Adrenal gland (tissue), 19 donors: ENCODE measurements at regions of chr1 and their contacts with region 1.

Region 1: DNA sequence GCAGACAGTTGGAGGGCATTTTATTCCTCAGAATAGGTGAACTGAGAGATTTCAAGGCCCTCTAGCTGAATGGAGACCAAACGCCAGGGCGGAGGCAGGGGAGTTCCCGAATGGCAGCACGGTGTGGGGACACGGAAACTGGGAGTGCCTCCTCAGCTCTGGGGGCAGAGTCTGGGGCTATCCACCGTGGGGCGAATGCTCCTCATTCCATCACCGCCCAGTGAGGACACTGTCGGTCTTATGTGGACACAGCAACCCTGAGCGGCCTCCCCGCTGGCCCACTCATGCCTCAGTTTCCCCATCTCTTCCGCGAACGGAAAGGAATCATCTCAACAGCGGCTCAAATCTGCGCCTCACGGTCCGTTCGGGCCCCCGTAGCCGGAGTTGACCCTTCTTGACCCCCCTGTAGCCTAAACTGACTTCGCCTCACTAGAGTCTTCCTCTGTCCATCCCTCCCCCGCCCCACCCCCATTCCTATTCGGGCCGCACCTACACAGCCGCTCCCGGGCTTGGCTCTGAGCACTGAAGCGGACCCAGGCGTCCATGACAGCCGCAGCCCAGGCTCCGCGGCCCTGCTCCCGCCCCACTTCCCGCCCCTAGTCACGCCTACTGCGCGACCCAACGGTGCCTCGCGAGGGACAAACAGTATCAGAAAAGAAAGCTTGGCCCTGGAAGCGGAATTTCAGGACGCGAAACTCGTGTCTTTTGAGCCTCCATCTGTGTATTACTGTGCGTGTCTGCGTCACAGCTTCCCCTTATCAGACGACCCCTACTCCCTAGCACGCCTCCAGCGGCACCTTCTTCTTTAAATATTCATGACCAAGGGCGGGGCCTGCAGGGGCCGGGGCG is at the start of gene PEX11B:
- DNase-seq: peak; percentile 86 to 94 (median 90)
- H3K4me3 ChIP-seq: peak within 1 kb of the TSS; percentile 14 to 85 (median 74)
- H3K27ac ChIP-seq: peak within 1 kb of the TSS; percentile 37 to 89 (median 77)
- H3K4me1 ChIP-seq: peaks cover 8 to 40% of the 10 kb centered on the region in 2 donors
- H3K27me3 ChIP-seq: no peaks in the 10 kb centered on the region
- CTCF ChIP-seq: peak in 1 of 6 experiments; percentile 26
- POLR2A ChIP-seq: peak; percentile 18 to 35
- total RNA-seq, gene PEX11B: 24.8 to 44.4 (median 33.0) TPM

Region 2: GRCh38 chr1:145957443-145958319 is 39.3 kb after region 1 on chr1 and contains the start of gene LIX1L:
- intact Hi-C with region 1: no loop called
- DNase-seq: peak; percentile 97 to 98 (median 98)
- H3K4me3 ChIP-seq: peak within 1 kb of the TSS in 3 of 4 donors; percentile 36 to 95 (median 39)
- H3K27ac ChIP-seq: peak within 1 kb of the TSS; percentile 84 to 100 (median 92)
- H3K4me1 ChIP-seq: peaks cover 46 to 57% of the 10 kb centered on the region in 2 donors
- H3K27me3 ChIP-seq: no peaks in the 10 kb centered on the region
- CTCF ChIP-seq: no peak
- POLR2A ChIP-seq: peak; percentile 71 to 91
- total RNA-seq, gene LIX1L: 15.6 to 61.2 (median 40.7) TPM

Region 3: DNA sequence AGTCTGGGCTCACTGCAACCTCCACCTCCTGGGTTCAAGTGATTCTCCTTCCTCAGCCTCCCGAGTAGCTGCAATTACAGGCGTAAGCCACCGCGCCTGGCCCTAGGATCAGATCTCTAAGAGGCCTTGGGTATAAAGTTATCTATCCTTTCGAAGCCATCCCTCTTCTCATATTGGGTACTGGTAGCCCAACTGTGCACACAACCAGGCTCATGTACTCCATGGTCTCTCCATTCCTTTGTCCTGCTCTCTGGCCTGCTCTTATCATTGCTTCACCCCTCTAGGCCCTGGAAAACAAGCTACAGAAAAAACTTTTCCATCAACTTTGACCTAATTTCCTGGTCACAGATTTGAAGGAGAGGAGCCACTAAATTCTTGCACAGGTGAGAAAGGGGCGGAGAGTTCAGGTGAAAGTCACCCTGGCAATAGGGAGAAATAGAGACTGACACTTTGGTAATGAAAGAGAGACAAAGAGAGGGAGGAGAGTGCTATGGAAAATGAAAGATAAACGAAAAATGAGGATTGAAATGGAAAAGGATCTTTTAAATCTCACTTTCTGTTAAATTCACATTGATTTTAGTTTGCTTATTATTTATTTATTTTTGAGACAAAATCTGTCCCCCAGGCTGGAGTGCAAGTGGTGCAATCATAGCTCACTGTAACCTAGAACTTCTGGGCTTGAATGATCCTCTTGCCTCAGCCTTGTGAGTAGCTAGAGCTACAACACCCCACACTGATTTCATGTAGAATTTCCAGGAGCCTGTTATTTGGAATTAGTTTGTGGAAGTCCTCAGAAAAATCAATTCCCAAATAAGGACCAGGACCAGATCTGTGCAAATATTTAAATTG is 72.1 kb after region 1 on chr1:
- intact Hi-C with region 1: no loop called
- DNase-seq: peak in 5 of 7 donors; percentile 40 to 75 (median 63)
- H3K4me3 ChIP-seq: peak overlapping the region in 1 of 4 donors; percentile 80
- H3K27ac ChIP-seq: peak overlapping the region; percentile 42 to 94 (median 83)
- H3K4me1 ChIP-seq: peaks cover 27 to 42% of the 10 kb centered on the region in 2 donors
- H3K27me3 ChIP-seq: no peaks in the 10 kb centered on the region
- CTCF ChIP-seq: peak in 1 of 6 experiments; percentile 14
- POLR2A ChIP-seq: peak; percentile 16 to 62

Region 4: GRCh38 chr1:146007506-146008133 is 89.3 kb after region 1 on chr1:
- intact Hi-C with region 1: loop called in 1 of 2 experiments (anchors 5 kb)
- DNase-seq: no peak
- H3K4me3 ChIP-seq: peak overlapping the region in 1 of 4 donors; percentile 46
- H3K27ac ChIP-seq: peak overlapping the region in 2 of 5 donors; percentile 77 to 95
- H3K4me1 ChIP-seq: peaks cover 0 to 22% of the 10 kb centered on the region in 2 donors
- H3K27me3 ChIP-seq: no peaks in the 10 kb centered on the region
- CTCF ChIP-seq: peak in 1 of 6 experiments; percentile 2
- POLR2A ChIP-seq: no peak